ENCODE measurements at regions of chr5 and their contacts with region 1.

Region 1: DNA sequence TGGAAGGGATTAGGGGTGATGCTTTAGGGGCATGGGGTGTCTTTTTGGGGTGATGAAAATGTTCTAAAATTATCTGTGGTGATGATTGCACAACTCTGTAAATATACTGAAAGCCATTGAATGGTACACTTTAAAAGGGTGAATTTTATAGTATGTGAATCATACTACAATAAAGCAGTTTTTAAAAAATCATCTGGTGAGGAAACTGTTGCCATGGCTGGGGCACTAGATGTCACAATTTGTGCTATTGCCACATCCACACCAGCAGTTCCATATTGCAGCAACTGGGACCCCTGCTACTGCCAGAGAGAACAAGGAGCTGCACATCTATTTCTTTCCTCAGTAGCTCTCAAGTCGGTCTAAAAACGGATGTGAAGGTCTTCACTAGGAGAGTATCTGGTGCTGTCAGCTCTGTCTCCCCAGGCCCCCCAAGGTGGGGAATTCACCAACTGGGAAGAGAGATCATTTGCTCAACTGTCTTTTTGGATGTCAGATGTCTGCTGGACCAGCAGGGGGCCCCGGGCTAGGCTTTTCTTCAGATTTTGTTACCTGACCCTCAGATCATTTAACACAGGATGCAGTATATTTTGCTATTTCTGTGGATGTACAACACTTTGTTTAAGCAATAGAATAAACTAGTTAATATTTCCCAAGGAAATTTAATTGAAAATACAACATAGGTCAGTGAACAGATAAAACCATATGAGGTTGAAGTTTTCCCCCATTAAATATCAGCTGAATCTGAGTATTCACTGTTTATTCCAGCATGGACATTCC is 13.2 kb downstream of the CMYA5 start:
- DNase-seq: peak in 1 of 2 experiments; percentile 49
- H3K4me3 ChIP-seq: no peak overlapping the region
- H3K4me3 Mint-ChIP-seq: no peak overlapping the region
- H3K27ac Mint-ChIP-seq: no peak overlapping the region
- H3K4me1 ChIP-seq: 0 out of 2 replicates have a peak, but pooled peaks cover 5% of the 10 kb centered on the region
- H3K4me1 Mint-ChIP-seq: no peaks in the 10 kb centered on the region
- H3K27me3 ChIP-seq: no peaks in the 10 kb centered on the region
- H3K27me3 Mint-ChIP-seq: no peaks in the 10 kb centered on the region
- CTCF ChIP-seq: peak; percentile 71 to 80

Region 2: DNA sequence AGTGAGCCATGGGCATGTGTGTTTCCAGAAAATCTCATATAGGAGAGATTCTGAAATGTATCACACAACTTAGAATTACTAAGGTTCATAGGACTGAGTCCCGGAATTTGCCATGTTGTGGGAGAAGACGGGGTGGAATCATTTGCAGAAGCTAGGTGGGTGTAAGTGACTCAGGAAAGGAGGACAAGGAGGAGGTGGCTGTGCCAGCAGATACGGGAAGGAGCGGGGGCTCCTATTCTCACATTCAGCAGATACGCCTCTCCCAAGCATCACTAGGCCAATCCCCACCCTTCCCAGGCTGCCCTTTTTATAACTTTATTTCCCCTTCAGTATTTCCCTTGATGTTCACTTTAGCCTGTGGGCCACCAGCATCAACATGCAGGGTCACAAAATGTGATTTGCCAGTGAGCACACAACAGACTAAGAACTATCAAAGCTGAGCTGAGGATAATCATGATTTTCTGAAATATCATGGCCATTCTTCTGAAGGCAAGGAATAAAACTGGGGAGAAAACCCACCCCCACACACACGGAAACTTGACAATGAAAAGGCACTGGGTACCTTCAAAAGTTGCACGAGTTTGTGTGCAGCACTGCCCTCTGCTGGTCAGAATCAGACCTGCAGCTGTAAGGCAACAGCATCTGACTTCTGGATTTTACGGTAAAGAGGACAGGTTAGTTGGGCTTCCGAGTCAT is 155.1 kb after region 1 on chr5:
- CTCF ChIA-PET with region 1: no interaction called
- POLR2A ChIA-PET with region 1: no interaction called
- intact Hi-C with region 1: loop called (anchors 1 kb)
- DNase-seq: peak; percentile 60 to 81
- H3K4me3 ChIP-seq: no peak overlapping the region
- H3K4me3 Mint-ChIP-seq: no peak overlapping the region
- H3K27ac Mint-ChIP-seq: no peak overlapping the region
- H3K4me1 ChIP-seq: no peaks in the 10 kb centered on the region
- H3K4me1 Mint-ChIP-seq: no peaks in the 10 kb centered on the region
- H3K27me3 ChIP-seq: no peaks in the 10 kb centered on the region; the same call in 1 of the 2 replicates
- H3K27me3 Mint-ChIP-seq: no peaks in the 10 kb centered on the region
- CTCF ChIP-seq: peak; percentile 94 to 95